K562 (cell line): ENCODE measurements at regions of chr4 and their contacts with region 1.

Region 1: GRCh38 chr4:2862528-2862927 is 18.9 kb downstream of the ADD1 start:
- DNase-seq: peak in 3 of 4 experiments; percentile 30 to 36 (median 35)
- ATAC-seq: peak; percentile 29
- H3K4me3 ChIP-seq: no peak overlapping the region
- H3K27ac ChIP-seq: no peak overlapping the region
- H3K4me1 ChIP-seq: peaks cover 19 to 55% of the 10 kb centered on the region in 2 experiments
- H3K27me3 ChIP-seq: no peaks in the 10 kb centered on the region
- CTCF ChIP-seq: no peak
- EP300 ChIP-seq: no peak
- POLR2A ChIP-seq: no peak
- RAD21 ChIP-seq: no peak

Region 2: GRCh38 chr4:2852481-2852921 is 10.0 kb before region 1 on chr4:
- CTCF ChIA-PET with region 1: no interaction called
- POLR2A ChIA-PET with region 1: interaction called, 16 read pairs
- in situ Hi-C with region 1: no loop called
- intact Hi-C with region 1: no loop called
- DNase-seq: peak in 1 of 4 experiments; percentile 63
- ATAC-seq: peak; percentile 57
- H3K4me3 ChIP-seq: no peak overlapping the region
- H3K27ac ChIP-seq: no peak overlapping the region
- H3K4me1 ChIP-seq: peaks cover 14 to 23% of the 10 kb centered on the region in 2 experiments
- H3K27me3 ChIP-seq: no peaks in the 10 kb centered on the region
- CTCF ChIP-seq: no peak
- EP300 ChIP-seq: no peak
- POLR2A ChIP-seq: no peak
- RAD21 ChIP-seq: no peak